ENCODE measurements at regions of chr17 and their contacts with region 1.

Region 1: DNA sequence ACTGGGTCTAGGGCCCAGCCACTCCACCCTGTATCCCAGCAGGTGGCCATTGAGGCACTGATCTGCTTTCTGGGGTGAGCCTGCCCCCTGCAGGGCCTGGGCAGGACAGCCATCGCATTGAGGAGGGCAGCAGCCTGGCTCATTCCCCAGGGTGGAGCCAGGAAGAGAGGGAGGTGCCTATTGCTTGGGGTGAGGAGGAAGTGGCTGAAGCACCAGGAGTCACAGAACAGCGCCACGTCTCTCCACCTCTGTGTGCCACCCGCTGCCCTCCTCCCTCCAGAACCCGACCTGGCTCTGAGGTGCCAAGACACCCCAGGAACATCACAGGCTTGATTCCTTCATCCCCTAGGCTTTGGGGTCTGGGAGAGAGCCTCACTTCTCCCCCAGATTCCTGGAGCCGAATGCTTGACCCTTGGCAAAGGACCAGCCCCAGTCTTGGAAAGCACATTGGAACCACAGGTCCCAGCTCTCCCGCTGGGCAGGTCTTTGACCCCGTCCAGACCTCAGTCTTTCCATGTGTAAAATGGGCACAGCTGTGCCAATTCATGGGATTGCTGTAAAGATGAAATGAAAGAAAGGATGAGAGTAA is 7.2 kb upstream of the KRT36 start:
- DNase-seq: peak; percentile 87
- ATAC-seq: peak; percentile 93
- H3K4me3 ChIP-seq: peak overlapping the region in 1 of 2 experiments; percentile 25; a peak in 1 of 4 replicates
- H3K27ac ChIP-seq: peak overlapping the region; percentile 61
- H3K4me1 ChIP-seq: peaks cover 34 to 90% of the 10 kb centered on the region in 2 experiments
- H3K27me3 ChIP-seq: no peaks in the 10 kb centered on the region
- CTCF ChIP-seq: peak; percentile 94 to 96 (median 95)
- POLR2A ChIP-seq: peak; percentile 74
- RAD21 ChIP-seq: peak; percentile 100

Region 2: GRCh38 chr17:40803617-40804082 is 693.3 kb before region 1 on chr17:
- CTCF ChIA-PET with region 1: no interaction called
- POLR2A ChIA-PET with region 1: no interaction called
- RAD21 ChIA-PET with region 1: no interaction called
- intact Hi-C with region 1: loop called (anchors 2 kb)
- DNase-seq: peak; percentile 74
- ATAC-seq: peak; percentile 99
- H3K4me3 ChIP-seq: no peak overlapping the region
- H3K27ac ChIP-seq: no peak overlapping the region
- H3K4me1 ChIP-seq: peaks cover 3 to 9% of the 10 kb centered on the region in 2 experiments; a peak in 3 of 4 replicates
- H3K27me3 ChIP-seq: no peaks in the 10 kb centered on the region
- CTCF ChIP-seq: peak; percentile 82 to 96 (median 88)
- POLR2A ChIP-seq: no peak
- RAD21 ChIP-seq: peak; percentile 98

Region 3: DNA sequence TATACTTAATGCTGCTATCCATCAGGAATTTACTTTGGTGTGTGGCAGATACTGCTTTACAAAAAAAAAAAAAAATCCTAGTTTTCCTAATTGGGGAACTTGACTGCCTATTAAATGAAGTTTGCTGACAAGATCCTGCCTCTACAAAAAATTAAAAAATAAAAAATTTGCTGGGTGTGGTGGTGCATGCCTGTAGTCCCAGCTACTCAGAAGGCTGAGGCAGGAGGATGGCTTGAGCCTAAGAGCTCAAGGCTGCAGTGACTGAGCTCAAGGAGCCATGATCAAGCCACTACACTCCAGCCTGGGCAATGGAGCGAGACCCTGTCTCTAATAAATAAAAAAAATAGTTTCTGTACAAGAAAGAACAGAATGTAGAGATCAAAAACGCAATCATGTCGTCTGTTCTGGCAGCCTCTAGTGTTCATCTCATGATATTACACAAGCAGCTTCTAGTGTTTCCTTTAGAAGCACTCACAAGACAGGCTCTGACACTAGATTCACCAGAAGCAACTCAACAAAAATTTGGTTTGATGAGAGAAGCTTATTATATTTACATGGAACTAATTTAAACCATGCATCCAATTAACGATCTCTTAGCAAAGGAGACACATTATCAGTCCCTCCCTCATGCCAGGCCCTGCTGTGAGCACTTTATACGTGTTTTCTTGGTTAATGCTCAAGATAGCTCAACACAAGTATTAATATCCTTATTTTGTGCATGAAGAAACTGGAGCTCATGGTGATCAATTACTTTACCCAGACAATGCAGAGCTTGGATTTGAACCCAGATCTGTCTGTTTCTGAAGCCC is 174.6 kb before region 1 on chr17:
- CTCF ChIA-PET with region 1: interaction called, 11 read pairs
- POLR2A ChIA-PET with region 1: no interaction called
- RAD21 ChIA-PET with region 1: no interaction called
- intact Hi-C with region 1: loop called (anchors 2 kb)
- DNase-seq: peak; percentile 35
- ATAC-seq: peak; percentile 46
- H3K4me3 ChIP-seq: no peak overlapping the region
- H3K27ac ChIP-seq: peak overlapping the region; percentile 35
- H3K4me1 ChIP-seq: peaks cover 5 to 18% of the 10 kb centered on the region in 2 experiments; a peak in 3 of 4 replicates
- H3K27me3 ChIP-seq: no peaks in the 10 kb centered on the region
- CTCF ChIP-seq: peak; percentile 52 to 67 (median 61); a peak in 5 of 6 replicates
- POLR2A ChIP-seq: no peak
- RAD21 ChIP-seq: peak; percentile 82

Region 4: DNA sequence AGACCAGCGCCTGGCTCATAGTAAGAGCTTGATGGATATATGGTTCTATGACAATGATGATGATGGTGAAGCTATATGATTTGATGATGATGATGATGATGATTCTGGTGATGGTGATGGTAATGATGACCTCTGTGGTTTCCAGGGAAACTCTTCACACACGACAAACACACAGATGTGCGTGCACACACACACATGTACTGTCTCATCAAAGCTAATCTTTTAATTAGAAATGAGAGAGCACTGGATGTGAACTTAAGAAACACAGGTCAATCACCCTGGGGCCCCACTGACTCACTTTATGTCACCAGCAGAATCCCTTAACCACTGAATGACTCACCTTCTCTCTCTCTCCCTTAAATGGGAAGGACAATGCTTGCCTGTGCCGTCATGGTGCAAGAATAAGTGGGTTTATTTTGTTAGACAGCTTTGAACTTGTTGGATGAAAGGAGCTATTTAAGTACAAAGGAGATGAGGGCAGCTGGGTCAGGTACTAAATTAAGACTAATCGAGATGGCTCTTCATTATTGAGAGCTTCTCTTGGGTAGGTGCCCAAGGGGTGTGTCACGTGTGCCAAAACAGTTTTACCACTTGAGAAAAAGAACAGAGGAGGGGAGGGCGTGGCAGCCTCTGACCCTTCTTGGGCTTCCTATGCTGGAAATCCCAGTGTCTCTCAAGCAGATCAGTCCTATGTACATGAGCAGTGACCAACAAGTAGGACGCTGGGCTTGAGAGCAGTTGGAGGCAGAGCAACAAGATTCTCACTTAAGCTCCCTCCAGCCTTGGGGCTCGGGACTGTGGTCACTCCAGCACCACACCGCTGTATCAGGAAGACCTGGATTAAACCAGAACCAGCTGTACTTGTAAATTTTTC is 92.9 kb before region 1 on chr17:
- CTCF ChIA-PET with region 1: interaction called, 10 read pairs
- POLR2A ChIA-PET with region 1: interaction called, 4 read pairs
- RAD21 ChIA-PET with region 1: interaction called in 1 of 2 experiments, 5 read pairs
- intact Hi-C with region 1: no loop called
- DNase-seq: peak; percentile 99
- ATAC-seq: peak; percentile 84
- H3K4me3 ChIP-seq: no peak overlapping the region
- H3K27ac ChIP-seq: peak overlapping the region; percentile 78
- H3K4me1 ChIP-seq: peaks cover 43 to 73% of the 10 kb centered on the region in 2 experiments
- H3K27me3 ChIP-seq: no peaks in the 10 kb centered on the region
- CTCF ChIP-seq: no peak
- POLR2A ChIP-seq: no peak
- RAD21 ChIP-seq: peak; percentile 56

Region 5: GRCh38 chr17:41417576-41418015 is 79.3 kb before region 1 on chr17:
- CTCF ChIA-PET with region 1: interaction called, 21 read pairs
- POLR2A ChIA-PET with region 1: no interaction called
- RAD21 ChIA-PET with region 1: interaction called in 1 of 2 experiments, 5 read pairs
- intact Hi-C with region 1: loop called (anchors 10 kb)
- DNase-seq: no peak
- ATAC-seq: peak; percentile 96
- H3K4me3 ChIP-seq: no peak overlapping the region
- H3K27ac ChIP-seq: no peak overlapping the region
- H3K4me1 ChIP-seq: peaks cover 15 to 44% of the 10 kb centered on the region in 2 experiments
- H3K27me3 ChIP-seq: no peaks in the 10 kb centered on the region
- CTCF ChIP-seq: peak; percentile 45 to 81 (median 73); a peak in 5 of 6 replicates
- POLR2A ChIP-seq: no peak
- RAD21 ChIP-seq: peak; percentile 62

Region 6: GRCh38 chr17:41510251-41511065 is 13.5 kb after region 1 on chr17:
- CTCF ChIA-PET with region 1: no interaction called
- POLR2A ChIA-PET with region 1: no interaction called
- RAD21 ChIA-PET with region 1: no interaction called
- intact Hi-C with region 1: no loop called
- DNase-seq: no peak
- ATAC-seq: 0 out of 2 replicates have a peak, but pooled peaks have one; percentile 25
- H3K4me3 ChIP-seq: no peak overlapping the region
- H3K27ac ChIP-seq: no peak overlapping the region
- H3K4me1 ChIP-seq: peaks cover 13 to 62% of the 10 kb centered on the region in 2 experiments
- H3K27me3 ChIP-seq: no peaks in the 10 kb centered on the region
- CTCF ChIP-seq: no peak
- POLR2A ChIP-seq: no peak
- RAD21 ChIP-seq: no peak

Measured in HCT116 (cell line).